Heart right ventricle (tissue), 16 donors: ENCODE measurements at regions of chr3 and their contacts with region 1.

Region 1: GRCh38 chr3:70742081-70742480 is 429.6 kb upstream of the MDFIC2 start:
- DNase-seq: no peak
- ATAC-seq: no peak
- H3K4me3 ChIP-seq: no peak overlapping the region
- H3K27ac ChIP-seq: no peak overlapping the region
- H3K4me1 ChIP-seq: no peaks in the 10 kb centered on the region
- H3K27me3 ChIP-seq: no peaks in the 10 kb centered on the region
- CTCF ChIP-seq: no peak

Region 2: GRCh38 chr3:69612791-69613190 is 1129.3 kb before region 1 on chr3:
- intact Hi-C with region 1: no loop called
- DNase-seq: no peak
- ATAC-seq: no peak
- H3K4me3 ChIP-seq: no peak overlapping the region
- H3K27ac ChIP-seq: no peak overlapping the region
- H3K4me1 ChIP-seq: no peaks in the 10 kb centered on the region
- H3K27me3 ChIP-seq: no peaks in the 10 kb centered on the region
- CTCF ChIP-seq: no peak

Region 3: DNA sequence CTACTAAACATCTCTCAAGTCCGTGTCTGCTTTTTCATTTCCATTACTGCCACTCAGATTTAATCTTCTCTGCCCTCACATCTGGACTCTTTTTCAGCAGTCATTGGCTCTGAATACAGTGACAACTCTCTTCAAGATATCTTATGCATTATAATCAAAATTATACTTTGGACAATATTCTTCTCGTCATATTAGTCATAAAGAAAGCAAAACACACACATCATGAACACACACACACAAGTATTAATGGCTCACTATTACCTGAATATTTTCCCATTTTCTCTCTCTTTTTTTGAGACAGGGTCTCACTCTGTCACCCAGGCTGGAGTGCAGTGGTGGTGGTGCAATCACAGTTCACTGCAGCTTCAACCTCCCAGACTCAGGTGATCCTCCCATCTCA is 529.6 kb before region 1 on chr3:
- intact Hi-C with region 1: no loop called
- DNase-seq: no peak
- ATAC-seq: no peak
- H3K4me3 ChIP-seq: no peak overlapping the region
- H3K27ac ChIP-seq: no peak overlapping the region
- H3K4me1 ChIP-seq: no peaks in the 10 kb centered on the region
- H3K27me3 ChIP-seq: no peaks in the 10 kb centered on the region
- CTCF ChIP-seq: no peak

Region 4: GRCh38 chr3:70702132-70702531 is 39.9 kb before region 1 on chr3:
- intact Hi-C with region 1: loop called in 1 of 10 experiments (anchors 2 kb)
- DNase-seq: no peak
- ATAC-seq: no peak
- H3K4me3 ChIP-seq: no peak overlapping the region
- H3K27ac ChIP-seq: no peak overlapping the region
- H3K4me1 ChIP-seq: peaks cover 0 to 12% (median 0%) of the 10 kb centered on the region in 9 donors
- H3K27me3 ChIP-seq: no peaks in the 10 kb centered on the region
- CTCF ChIP-seq: no peak